WTC11 (cell line): ENCODE measurements at regions of chr2 and their contacts with region 1.

Region 1: DNA sequence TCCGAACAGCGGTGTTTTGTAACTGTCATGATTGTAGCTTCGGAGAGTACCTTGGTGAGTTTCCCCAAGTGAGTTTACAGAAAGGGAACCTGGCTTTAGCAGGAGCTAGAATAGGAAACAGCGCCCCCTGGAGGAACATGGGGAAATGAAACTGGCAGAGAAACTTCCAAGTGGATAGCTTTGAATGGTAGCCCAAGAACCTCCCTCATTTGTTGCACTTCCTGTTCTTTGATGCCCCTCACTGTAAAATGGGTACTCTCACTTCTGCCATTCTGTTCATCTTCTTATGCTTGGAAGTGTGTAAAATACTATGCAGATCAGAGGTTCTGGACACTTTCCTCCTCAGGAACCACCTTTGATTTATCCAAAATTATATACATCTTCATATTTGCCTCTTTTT is 36.2 kb downstream of the CHST10 start:
- DNase-seq: peak; percentile 91
- ATAC-seq: peak; percentile 89
- H3K4me3 Mint-ChIP-seq: no peak overlapping the region
- H3K27ac Mint-ChIP-seq: no peak overlapping the region
- H3K4me1 Mint-ChIP-seq: 0 out of 2 replicates have a peak, but pooled peaks cover 2% of the 10 kb centered on the region
- H3K27me3 Mint-ChIP-seq: no peaks in the 10 kb centered on the region
- CTCF ChIP-seq: peak; percentile 95

Region 2: GRCh38 chr2:100216015-100216414 is 165.2 kb before region 1 on chr2:
- CTCF ChIA-PET with region 1: no interaction called
- POLR2A ChIA-PET with region 1: no interaction called
- DNase-seq: no peak
- ATAC-seq: no peak
- H3K4me3 Mint-ChIP-seq: no peak overlapping the region
- H3K27ac Mint-ChIP-seq: no peak overlapping the region
- H3K4me1 Mint-ChIP-seq: no peaks in the 10 kb centered on the region
- H3K27me3 Mint-ChIP-seq: no peaks in the 10 kb centered on the region
- CTCF ChIP-seq: no peak

Region 3: DNA sequence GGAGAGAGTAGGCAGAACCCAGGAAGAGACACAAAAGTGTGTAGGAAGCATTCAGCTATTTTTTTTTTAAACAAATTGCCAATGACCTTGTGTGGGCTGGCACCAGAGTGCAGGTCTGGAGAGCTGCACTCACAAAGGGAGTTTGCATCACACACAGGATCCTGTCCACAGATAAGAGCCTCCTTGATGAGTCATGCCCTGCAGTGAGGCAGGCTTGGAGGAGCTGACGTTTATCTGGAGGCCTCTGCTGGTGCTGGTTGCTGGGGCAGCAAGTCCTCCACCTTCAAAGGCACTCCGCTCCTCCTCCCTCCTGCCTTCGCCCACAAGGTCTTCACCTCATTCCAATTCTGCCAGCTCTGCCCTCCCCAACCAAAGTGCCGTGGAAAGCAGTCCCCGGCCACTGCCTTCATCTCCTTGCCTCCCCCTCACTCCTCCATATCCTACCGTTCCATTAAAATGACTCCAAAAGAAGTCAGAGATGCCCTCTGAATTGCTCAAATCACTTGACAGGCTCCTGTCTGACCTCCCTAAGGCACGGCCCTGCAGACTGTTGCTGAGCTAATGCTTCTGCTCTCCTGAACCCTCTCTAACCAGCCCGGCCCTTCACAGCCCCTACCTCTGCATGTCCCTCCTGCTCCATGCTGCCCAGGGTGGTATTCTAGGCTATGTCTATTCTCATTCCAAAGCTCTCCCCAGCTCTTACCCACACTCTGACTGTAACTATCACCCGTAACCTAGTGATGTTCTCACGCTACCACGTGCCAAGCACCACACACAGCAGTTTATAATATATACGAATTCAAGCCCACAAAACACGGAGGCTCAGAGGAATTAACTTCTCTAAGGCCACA is 89.9 kb before region 1 on chr2:
- CTCF ChIA-PET with region 1: interaction called, 14 read pairs
- POLR2A ChIA-PET with region 1: interaction called, 3 read pairs
- DNase-seq: no peak
- ATAC-seq: peak; percentile 43
- H3K4me3 Mint-ChIP-seq: no peak overlapping the region
- H3K27ac Mint-ChIP-seq: no peak overlapping the region
- H3K4me1 Mint-ChIP-seq: peaks cover 14% of the 10 kb centered on the region
- H3K27me3 Mint-ChIP-seq: no peaks in the 10 kb centered on the region
- CTCF ChIP-seq: no peak

Region 4: GRCh38 chr2:100352521-100352920 is 28.7 kb before region 1 on chr2:
- CTCF ChIA-PET with region 1: interaction called, 10 read pairs
- POLR2A ChIA-PET with region 1: no interaction called
- DNase-seq: no peak
- ATAC-seq: no peak
- H3K4me3 Mint-ChIP-seq: no peak overlapping the region
- H3K27ac Mint-ChIP-seq: no peak overlapping the region
- H3K4me1 Mint-ChIP-seq: peaks cover 11% of the 10 kb centered on the region
- H3K27me3 Mint-ChIP-seq: no peaks in the 10 kb centered on the region
- CTCF ChIP-seq: no peak

Region 5: DNA sequence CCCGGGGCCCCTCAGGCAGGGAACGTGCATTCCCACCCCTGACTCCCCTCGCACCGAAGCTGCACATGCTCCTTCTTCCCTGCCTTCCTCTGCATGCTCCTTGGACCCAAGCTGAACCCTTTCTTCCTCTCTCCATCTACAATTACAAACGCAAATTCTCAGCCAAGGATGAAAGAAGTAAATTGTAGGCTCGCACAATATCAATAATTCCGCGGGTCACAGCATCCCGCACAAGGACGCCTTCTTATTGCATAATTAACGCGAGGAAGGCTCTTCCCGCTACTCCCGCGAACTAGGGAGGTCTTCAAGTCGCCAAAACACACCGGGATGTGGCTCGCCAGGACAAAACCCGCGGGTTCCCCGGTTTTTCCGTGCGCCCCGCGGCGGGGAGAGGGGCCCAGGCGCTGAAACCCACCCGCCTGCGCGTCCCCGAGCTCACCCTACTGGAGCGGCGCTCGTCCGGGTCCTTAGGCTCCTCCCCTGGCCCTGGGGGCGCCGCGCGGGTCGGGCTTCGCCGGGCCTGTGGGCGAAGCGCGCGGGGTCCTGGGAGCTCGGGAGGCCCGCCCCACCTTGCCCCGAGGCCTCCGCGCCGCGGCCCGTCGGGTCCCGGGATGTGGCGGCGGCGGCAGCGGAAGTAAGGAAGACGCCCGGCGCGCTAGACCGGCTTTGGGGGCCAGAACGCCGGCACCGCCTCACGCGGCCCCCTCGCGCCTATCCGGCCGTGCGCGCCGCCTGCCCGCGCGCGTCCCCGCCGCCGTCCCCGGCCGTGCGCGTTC is 35.9 kb after region 1 on chr2 and contains the start of gene CHST10:
- CTCF ChIA-PET with region 1: interaction called, 10 read pairs
- POLR2A ChIA-PET with region 1: no interaction called
- DNase-seq: peak; percentile 58
- ATAC-seq: peak; percentile 81
- H3K4me3 Mint-ChIP-seq: peak within 1 kb of the TSS; percentile 92
- H3K27ac Mint-ChIP-seq: peak within 1 kb of the TSS; percentile 92
- H3K4me1 Mint-ChIP-seq: peaks cover 53% of the 10 kb centered on the region
- H3K27me3 Mint-ChIP-seq: no peaks in the 10 kb centered on the region
- CTCF ChIP-seq: no peak
- total RNA-seq, gene CHST10: 19.9 to 24.4 TPM (median 21.6 TPM) in 3 replicates